Activated T-helper 2 cell treated with anti-CD3 and anti-CD28 coated beads, Interferon-gamma antibody, Interleukin-2, Interleukin-4, amounts not matched to agents 10 μg/mL and 5 μg/mL and 100 μg/mL, durations not matched to agents 14 hours and 24 hours and 36 hours (primary cell): ENCODE measurements at regions of chr2 and their contacts with region 1.

Region 1: GRCh38 chr2:161426922-161427663 is 11.0 kb downstream of the TBR1 start:
- DNase-seq: peak; percentile 9
- H3K4me3 Mint-ChIP-seq: peak overlapping the region; percentile 54
- H3K27ac Mint-ChIP-seq: peak overlapping the region; percentile 19
- H3K4me1 Mint-ChIP-seq: peaks cover 25% of the 10 kb centered on the region
- H3K27me3 Mint-ChIP-seq: peaks cover 85% of the 10 kb centered on the region

Region 2: DNA sequence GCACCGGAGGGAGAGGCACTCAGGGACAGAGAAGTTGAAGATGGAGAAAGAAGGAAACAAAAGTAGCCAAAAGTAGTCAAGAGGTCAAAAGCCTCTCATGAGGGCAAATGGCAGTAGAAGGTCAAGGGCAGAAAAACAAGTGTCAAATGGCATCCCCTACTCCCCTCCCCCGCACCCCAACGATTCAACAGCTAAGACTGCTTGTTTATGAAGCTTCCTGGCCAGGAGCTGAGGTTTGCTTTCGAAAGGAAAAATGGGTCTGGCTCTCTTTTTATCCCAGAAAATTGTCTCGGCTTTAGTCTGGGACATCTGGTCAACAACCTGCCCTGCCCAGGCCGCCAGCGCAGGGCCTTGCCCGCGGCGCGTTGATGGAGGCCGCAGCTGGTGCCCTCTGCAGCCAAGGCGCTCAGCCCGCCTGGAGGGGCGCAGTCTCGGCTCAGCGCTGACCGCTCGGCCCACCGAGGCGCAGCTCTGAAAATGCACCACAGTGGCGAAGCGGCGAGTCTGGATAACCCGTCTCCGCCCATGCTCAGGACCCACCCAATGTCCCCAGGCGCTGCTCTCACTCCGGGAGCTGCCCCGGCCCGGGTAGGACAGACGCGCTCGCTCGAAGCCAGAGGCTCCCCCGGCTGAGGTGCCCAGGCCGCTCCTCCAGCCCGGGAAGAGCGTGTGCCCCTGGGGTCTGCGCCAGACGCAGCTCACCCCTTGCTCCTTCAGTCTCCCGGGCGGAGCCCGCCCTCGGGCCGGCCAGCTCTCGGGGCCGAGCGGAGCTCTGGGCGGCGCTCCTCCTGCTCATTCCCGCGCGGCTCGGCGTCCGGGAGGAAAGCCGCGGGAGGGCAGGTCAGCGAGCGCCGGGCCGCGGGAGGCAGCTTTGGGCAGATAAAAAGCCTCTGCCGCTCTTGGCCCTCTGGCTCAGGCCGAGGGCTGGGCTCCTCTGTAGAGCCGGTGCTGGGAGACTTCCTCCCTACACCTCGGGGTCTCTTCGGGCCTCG is 12.8 kb before region 1 on chr2:
- intact Hi-C with region 1: loop called (anchors 1 kb)
- DNase-seq: peak; percentile 10
- H3K4me3 Mint-ChIP-seq: peak overlapping the region; percentile 31
- H3K27ac Mint-ChIP-seq: no peak overlapping the region
- H3K4me1 Mint-ChIP-seq: peaks cover 46% of the 10 kb centered on the region
- H3K27me3 Mint-ChIP-seq: peaks cover 52% of the 10 kb centered on the region

Region 3: DNA sequence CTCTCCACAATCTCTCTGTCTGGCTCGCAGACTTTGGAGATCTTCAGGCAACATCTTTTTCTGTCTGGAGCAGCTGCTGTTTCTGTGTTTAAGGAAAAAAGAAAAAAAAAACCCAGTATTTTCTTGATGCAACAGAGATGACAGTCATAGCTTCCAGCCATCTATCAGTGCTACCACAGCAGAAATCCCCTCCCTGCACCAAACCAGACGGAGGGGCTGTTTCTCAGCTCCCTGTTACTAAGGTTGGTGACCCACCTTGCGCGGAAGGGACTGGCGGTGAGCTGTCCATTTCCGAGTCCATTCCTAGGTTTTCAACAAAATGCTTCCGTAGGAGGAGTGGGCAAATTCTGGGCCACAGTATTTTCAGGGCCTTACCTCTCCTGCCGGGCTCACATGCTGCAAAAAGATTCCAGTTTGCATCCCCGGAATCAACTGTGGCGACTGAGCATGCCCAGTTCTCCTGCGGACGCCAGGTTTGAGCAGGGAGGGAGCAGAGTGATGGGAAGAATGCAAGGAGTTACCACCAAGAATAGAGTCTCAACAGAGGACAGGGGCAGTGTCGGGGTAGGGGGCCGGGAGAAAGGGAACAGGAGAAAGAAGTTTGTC is 198.3 kb after region 1 on chr2:
- intact Hi-C with region 1: loop called (anchors 10 kb)
- DNase-seq: no peak
- H3K4me3 Mint-ChIP-seq: no peak overlapping the region
- H3K27ac Mint-ChIP-seq: no peak overlapping the region
- H3K4me1 Mint-ChIP-seq: peaks cover 3% of the 10 kb centered on the region
- H3K27me3 Mint-ChIP-seq: peaks cover 42% of the 10 kb centered on the region

Region 4: DNA sequence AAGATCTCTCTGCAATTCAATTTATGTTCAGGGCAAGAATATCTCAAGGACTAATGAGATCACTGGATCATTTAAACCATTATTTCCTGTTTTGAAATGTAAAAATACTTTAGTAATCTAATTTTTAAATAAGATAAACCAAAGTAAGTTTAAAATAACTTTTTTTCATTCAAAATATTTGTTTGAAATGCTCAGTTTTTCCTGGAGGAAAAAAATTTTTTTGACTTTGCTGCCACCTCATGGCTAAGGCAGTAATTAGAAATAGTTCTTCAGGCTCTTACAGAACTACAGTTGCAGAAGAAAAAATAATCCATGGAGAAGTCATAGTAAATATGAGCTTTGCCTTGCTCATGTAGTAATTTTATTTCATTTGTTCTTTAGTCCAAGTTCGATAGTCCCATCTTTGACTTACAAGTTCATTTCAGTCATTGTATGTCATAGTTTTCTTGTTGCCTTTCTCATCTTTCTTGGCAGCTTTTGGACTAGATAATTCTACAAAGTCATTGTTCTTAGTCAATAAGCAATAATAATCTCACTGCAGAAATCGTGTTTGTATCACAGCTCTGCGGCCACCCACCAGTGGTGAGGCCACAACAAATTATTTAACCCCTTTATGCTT is 519.5 kb after region 1 on chr2:
- intact Hi-C with region 1: loop called (anchors 5 kb)
- DNase-seq: no peak
- H3K4me3 Mint-ChIP-seq: no peak overlapping the region
- H3K27ac Mint-ChIP-seq: no peak overlapping the region
- H3K4me1 Mint-ChIP-seq: peaks cover 33% of the 10 kb centered on the region
- H3K27me3 Mint-ChIP-seq: peaks cover 9% of the 10 kb centered on the region